Posterior cingulate gyrus (tissue), 11 donors: ENCODE measurements at regions of chr16 and their contacts with region 1.

Region 1: GRCh38 chr16:6684076-6684673 is 648.5 kb upstream of the RBFOX1 start:
- DNase-seq: peak in 8 of 10 donors; percentile 28 to 90 (median 46)

Region 2: DNA sequence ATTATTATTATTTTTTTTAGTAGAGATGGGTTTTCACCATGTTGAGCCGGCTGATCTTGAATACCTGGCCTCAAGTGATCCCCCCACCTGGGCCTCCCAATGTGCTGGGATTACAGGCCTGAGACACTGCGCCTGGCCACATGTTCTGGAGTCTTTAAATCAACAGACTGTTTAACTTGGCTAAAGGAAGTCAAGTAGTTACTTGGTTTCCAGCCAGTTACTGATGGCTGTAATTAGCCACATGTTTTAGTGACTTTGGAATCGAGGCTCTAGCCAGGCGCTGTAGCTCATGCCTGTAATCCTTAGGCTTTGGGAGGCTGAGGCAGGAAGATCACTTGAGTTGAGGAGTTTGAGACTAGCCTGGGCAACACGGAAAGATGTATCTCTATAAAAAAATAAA is 50.7 kb before region 1 on chr16:
- intact Hi-C with region 1: no loop called
- DNase-seq: no peak

Region 3: GRCh38 chr16:6722786-6723185 is 38.6 kb after region 1 on chr16:
- intact Hi-C with region 1: no loop called
- DNase-seq: no peak

Region 4: DNA sequence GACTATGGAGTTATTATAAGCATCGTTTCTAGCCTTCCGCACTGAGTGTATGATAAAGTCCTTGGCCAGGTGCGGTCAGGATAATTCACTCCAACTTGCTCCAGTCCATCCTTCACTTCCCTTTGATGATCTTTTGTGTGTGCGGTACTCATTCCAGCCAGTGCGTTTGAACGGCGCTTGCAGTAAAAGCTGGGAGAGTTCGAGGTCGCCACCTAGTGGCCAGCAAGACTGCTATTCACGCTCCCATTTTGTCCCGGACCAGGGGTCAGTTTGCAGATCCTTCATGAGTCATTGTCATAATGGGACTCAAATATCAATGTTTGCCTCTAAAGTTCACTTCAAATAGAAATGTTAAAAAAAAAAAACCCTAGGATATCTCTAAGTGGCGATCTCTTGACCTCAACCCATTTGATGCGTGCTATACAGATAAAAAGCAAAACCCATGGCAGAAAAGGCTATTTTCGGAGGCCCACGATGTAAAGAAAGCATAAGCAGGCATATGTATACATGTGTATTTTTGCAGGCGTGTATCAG is 1489.0 kb after region 1 on chr16:
- intact Hi-C with region 1: loop called (anchors 2 kb)
- DNase-seq: peak; percentile 57 to 95 (median 76)